CD8-positive, alpha-beta T cell (primary cell): ENCODE measurements at regions of chr20 and their contacts with region 1.

Region 1: DNA sequence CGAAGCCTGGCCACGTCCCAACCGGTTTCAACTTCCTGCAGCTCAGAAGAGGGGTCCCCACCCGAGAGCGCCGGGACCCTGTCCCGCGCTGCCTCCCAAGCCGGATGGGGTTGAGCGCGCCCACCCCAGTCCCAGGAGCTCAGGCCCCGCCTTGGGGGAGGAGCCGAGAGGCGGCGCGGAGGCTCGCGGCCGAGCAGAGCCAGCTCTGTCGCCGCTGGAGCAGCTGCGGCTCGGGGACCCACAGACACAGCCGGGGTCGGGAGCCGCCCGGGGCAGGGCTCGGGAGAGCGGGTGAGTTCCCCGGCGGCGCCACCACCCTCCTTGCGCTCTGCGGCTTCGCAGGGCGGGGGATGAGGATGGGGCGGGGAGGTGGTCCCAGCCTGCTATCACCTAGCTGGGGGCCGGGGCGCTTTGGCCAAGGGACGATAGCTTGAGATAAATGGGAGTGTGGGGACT is at the start of gene PPP1R16B:
- DNase-seq: peak; percentile 73 to 92 (median 84)
- ATAC-seq: peak; percentile 70
- H3K4me3 ChIP-seq: peak within 1 kb of the TSS; percentile 72 to 97
- H3K4me3 Mint-ChIP-seq: peak within 1 kb of the TSS; percentile 87
- H3K27ac ChIP-seq: peak within 1 kb of the TSS; percentile 99
- H3K27ac Mint-ChIP-seq: peak within 1 kb of the TSS; percentile 93
- H3K4me1 ChIP-seq: peaks cover 47% of the 10 kb centered on the region
- H3K4me1 Mint-ChIP-seq: peaks cover 51% of the 10 kb centered on the region
- H3K27me3 ChIP-seq: no peaks in the 10 kb centered on the region
- H3K27me3 Mint-ChIP-seq: no peaks in the 10 kb centered on the region
- CTCF ChIP-seq: no peak
- total RNA-seq, gene PPP1R16B: 128 to 129 TPM

Region 2: DNA sequence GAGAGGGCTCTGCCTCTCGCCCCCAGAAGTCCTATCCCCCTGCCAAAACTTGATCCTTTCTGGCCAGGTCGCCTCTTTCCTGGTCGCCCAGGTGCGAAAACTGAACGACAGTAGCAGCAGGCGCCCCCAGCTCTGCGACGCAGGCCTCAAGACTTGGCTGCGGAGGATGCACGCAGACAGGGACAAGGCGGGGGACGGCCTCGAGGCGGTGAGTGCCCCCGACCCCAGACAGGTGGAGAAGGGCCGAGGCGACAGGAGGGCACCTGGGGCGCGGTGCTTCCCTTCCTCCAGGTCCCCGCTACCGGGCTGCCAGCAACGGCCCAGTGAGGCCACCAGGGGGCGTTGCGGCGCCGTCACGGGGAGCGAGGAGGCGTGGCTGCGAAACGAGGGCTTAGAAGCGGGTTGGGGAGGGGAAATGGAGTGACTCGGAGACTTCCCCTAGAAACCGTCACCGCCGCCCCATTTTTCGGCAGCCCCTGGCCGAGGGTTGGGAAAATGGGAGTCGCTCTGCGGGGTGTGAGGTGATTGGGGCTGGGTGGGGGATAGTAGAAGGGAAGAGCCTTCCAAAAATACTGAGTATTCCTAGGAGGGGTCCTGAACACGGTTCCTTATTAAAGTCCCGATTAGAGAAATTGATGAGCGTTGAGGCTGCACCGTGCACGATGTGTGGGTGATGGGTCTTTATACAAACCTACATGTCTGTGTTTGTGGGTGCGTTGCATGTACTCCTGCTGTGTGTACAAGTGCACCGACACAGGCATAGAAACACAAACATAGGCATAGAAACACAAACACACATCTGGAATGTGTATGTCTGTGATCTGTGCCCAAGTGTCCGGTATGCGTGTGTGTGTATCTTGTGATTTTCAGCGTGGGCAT is 159.3 kb before region 1 on chr20:
- CTCF ChIA-PET with region 1: no interaction called
- POLR2A ChIA-PET with region 1: no interaction called
- intact Hi-C with region 1: loop called in 1 of 2 experiments (anchors 5 kb)
- DNase-seq: peak; percentile 83 to 97 (median 91)
- ATAC-seq: peak; percentile 99
- H3K4me3 ChIP-seq: peak overlapping the region; percentile 13 to 25
- H3K4me3 Mint-ChIP-seq: peak overlapping the region; percentile 76
- H3K27ac ChIP-seq: no peak overlapping the region
- H3K27ac Mint-ChIP-seq: peak overlapping the region; percentile 28
- H3K4me1 ChIP-seq: peaks cover 4% of the 10 kb centered on the region
- H3K4me1 Mint-ChIP-seq: peaks cover 8% of the 10 kb centered on the region
- H3K27me3 ChIP-seq: peaks cover 8 to 11% of the 10 kb centered on the region in 2 experiments
- H3K27me3 Mint-ChIP-seq: peaks cover 30% of the 10 kb centered on the region
- CTCF ChIP-seq: peak; percentile 84

Region 3: DNA sequence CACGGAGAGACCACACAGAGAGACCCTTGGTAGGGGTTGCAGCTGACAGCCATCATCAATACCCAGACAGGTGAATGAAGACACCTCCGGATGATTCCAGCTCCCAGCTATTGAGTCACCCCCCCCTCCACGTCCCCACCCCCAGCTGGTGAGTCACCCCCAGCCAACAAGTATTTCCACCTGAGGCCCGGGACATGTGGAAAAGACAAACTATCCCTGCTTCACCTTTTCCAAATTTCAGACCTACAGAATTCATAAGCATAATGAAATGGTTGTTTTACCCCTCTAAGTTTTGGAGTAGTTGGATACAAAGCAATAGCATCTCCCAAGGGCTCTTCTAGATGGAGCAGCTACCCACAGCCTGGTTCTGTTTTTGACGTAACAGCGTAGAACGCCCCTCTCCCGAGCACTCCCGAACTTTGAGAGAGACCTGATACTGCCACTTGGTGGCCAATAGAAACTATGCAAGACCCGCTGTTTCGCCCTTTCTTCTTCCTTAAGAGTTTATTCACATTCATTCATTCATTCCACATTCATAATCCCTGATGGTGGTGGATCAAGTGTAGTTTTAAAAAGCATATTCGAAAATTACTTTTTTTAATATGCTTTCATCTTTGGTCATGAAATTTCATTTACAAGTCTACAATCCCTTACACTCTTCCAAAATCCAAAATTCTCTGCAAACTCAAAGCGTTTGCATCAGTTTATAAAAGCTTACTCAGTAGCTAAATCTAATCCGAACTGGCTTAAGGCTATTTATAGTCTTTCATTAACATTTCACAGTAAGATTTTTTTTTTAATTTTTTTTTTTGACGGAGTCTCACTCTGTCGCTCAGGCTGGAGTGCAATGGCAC is 15.1 kb before region 1 on chr20:
- CTCF ChIA-PET with region 1: interaction called, 30 read pairs
- POLR2A ChIA-PET with region 1: interaction called, 4 read pairs
- intact Hi-C with region 1: loop called (anchors 1 to 2 kb)
- DNase-seq: peak in 8 of 9 experiments; percentile 17 to 79 (median 54)
- ATAC-seq: peak; percentile 90
- H3K4me3 ChIP-seq: no peak overlapping the region
- H3K4me3 Mint-ChIP-seq: peak overlapping the region; percentile 30
- H3K27ac ChIP-seq: no peak overlapping the region
- H3K27ac Mint-ChIP-seq: no peak overlapping the region
- H3K4me1 ChIP-seq: no peaks in the 10 kb centered on the region
- H3K4me1 Mint-ChIP-seq: peaks cover 15% of the 10 kb centered on the region
- H3K27me3 ChIP-seq: no peaks in the 10 kb centered on the region
- H3K27me3 Mint-ChIP-seq: no peaks in the 10 kb centered on the region
- CTCF ChIP-seq: peak; percentile 69

Region 4: DNA sequence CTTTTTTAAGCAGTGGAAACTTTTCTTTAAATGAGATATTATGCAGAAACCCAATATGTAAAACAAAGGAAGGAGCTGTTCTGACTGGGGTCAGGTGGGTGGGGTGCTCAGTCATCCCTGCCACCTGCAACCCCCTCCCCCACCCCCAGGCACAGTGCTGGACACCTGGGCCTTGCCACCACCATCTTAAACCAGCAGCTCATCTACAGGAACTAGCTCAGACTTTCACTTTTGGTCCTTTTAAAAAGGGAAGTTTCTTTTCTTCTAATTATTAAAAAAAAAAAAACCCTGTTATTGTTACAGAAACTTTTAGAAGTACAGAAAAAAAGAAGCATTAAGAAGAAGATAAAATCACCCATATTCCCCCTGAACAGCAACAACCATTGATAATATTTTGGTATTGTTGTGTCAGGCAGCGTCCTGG is 37.0 kb after region 1 on chr20:
- CTCF ChIA-PET with region 1: interaction called, 5 read pairs
- POLR2A ChIA-PET with region 1: interaction called, 19 read pairs
- intact Hi-C with region 1: loop called (anchors 1 kb)
- DNase-seq: peak in 3 of 9 experiments; percentile 57 to 72 (median 58)
- ATAC-seq: peak; percentile 19
- H3K4me3 ChIP-seq: no peak overlapping the region
- H3K4me3 Mint-ChIP-seq: peak overlapping the region; percentile 64
- H3K27ac ChIP-seq: peak overlapping the region; percentile 35 to 95
- H3K27ac Mint-ChIP-seq: peak overlapping the region; percentile 96
- H3K4me1 ChIP-seq: peaks cover 58% of the 10 kb centered on the region
- H3K4me1 Mint-ChIP-seq: peaks cover 84% of the 10 kb centered on the region
- H3K27me3 ChIP-seq: no peaks in the 10 kb centered on the region
- H3K27me3 Mint-ChIP-seq: no peaks in the 10 kb centered on the region
- CTCF ChIP-seq: no peak

Region 5: GRCh38 chr20:38883081-38883980 is 77.8 kb after region 1 on chr20:
- CTCF ChIA-PET with region 1: interaction called, 19 read pairs
- POLR2A ChIA-PET with region 1: interaction called, 4 read pairs
- intact Hi-C with region 1: no loop called
- DNase-seq: peak in 4 of 9 experiments; percentile 34 to 53 (median 38)
- ATAC-seq: peak; percentile 37
- H3K4me3 ChIP-seq: no peak overlapping the region
- H3K4me3 Mint-ChIP-seq: peak overlapping the region; percentile 50
- H3K27ac ChIP-seq: peak overlapping the region in 1 of 2 experiments; percentile 48
- H3K27ac Mint-ChIP-seq: peak overlapping the region; percentile 89
- H3K4me1 ChIP-seq: peaks cover 19% of the 10 kb centered on the region
- H3K4me1 Mint-ChIP-seq: peaks cover 63% of the 10 kb centered on the region
- H3K27me3 ChIP-seq: no peaks in the 10 kb centered on the region
- H3K27me3 Mint-ChIP-seq: no peaks in the 10 kb centered on the region
- CTCF ChIP-seq: no peak

Region 6: DNA sequence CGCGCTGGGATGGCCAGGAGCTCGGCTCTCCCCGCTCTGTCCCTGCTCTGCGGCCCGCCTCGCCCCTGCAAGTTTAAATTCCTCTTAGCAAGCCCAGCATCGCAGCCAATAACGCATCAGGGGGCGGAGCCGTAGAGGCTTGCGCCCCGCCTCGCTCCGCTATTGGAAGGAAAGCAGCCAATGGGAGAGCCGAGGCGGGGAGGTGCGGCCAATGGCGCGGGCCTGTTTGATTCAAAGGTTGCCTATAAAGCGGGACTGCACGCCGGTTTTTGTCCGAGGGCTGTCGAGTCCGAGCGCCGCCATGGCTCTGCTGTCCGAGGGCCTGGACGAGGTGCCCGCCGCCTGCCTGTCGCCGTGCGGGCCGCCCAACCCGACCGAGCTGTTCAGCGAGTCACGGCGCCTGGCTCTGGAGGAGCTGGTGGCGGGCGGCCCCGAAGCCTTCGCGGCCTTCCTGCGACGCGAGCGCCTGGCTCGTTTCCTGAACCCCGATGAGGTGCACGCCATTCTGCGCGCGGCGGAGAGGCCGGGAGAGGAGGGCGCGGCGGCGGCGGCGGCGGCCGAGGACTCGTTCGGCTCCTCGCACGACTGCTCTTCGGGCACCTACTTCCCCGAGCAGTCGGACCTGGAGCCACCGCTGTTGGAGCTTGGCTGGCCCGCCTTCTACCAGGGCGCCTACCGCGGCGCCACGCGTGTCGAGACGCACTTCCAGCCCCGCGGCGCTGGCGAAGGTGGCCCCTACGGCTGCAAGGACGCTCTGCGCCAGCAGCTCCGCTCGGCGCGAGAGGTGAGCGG is 120.8 kb after region 1 on chr20 and contains the start of gene FAM83D:
- CTCF ChIA-PET with region 1: no interaction called
- POLR2A ChIA-PET with region 1: interaction called, 4 read pairs
- intact Hi-C with region 1: loop called in 1 of 2 experiments (anchors 1 kb)
- DNase-seq: peak; percentile 77 to 96 (median 91)
- ATAC-seq: peak; percentile 93
- H3K4me3 ChIP-seq: peak within 1 kb of the TSS; percentile 52 to 78
- H3K4me3 Mint-ChIP-seq: peak within 1 kb of the TSS; percentile 79
- H3K27ac ChIP-seq: peak within 1 kb of the TSS; percentile 35 to 47
- H3K27ac Mint-ChIP-seq: peak within 1 kb of the TSS; percentile 34
- H3K4me1 ChIP-seq: peaks cover 14% of the 10 kb centered on the region
- H3K4me1 Mint-ChIP-seq: peaks cover 25% of the 10 kb centered on the region
- H3K27me3 ChIP-seq: no peaks in the 10 kb centered on the region
- H3K27me3 Mint-ChIP-seq: no peaks in the 10 kb centered on the region
- CTCF ChIP-seq: no peak
- total RNA-seq, gene FAM83D: 5.3 to 6.3 TPM